ENCODE measurements at regions of chr5 and their contacts with region 1.

Region 1: DNA sequence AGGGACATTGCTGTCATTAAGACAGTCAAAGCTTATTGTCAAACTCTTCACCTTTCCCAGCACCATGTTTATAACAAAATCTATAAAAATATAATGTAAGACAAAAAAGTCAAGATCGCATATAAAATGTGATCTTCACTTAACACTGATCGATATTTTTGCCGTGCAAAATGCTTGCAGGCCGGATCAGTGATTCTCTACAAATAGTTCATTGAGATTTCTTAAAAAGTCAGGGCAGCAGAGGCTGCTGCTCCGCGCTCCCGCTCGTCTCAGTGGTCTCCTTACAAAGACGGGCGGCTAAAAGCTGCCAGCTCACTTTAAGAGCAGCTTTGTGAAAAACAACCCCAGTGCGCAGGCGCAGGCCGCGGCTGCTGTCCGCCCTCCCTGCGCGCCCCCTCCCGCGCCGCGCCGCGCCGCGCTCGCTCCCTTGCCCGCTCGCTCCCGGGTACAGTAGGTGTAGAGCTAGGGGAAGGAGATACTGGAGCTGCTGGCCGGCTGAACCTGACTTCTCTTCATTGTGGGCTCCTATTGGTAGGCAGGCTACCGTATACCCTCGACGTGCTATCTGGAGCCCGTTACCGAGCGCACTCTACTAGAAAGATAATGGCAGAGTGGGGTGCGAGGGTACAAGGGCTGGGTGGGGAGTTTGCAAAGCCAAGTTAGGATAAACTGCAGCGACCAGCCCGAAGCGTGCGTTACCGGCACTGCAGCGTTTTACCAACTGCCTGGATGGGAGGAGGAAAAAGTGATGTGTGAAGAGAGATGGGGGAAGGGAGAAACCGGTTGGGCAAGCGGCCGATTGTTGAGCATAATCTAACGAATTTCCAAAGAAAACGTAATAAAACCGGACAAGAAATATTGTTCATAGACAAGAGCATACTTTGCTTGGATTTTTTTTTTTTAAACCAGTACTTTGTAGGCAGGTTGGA is at the start of gene ARRDC3:
- DNase-seq: peak; percentile 98
- H3K4me3 Mint-ChIP-seq: peak within 1 kb of the TSS; percentile 87
- H3K27ac Mint-ChIP-seq: peak within 1 kb of the TSS; percentile 97
- H3K4me1 Mint-ChIP-seq: peaks cover 24% of the 10 kb centered on the region
- H3K27me3 Mint-ChIP-seq: no peaks in the 10 kb centered on the region
- total RNA-seq, gene ARRDC3: 46.5 to 47.1 TPM

Region 2: DNA sequence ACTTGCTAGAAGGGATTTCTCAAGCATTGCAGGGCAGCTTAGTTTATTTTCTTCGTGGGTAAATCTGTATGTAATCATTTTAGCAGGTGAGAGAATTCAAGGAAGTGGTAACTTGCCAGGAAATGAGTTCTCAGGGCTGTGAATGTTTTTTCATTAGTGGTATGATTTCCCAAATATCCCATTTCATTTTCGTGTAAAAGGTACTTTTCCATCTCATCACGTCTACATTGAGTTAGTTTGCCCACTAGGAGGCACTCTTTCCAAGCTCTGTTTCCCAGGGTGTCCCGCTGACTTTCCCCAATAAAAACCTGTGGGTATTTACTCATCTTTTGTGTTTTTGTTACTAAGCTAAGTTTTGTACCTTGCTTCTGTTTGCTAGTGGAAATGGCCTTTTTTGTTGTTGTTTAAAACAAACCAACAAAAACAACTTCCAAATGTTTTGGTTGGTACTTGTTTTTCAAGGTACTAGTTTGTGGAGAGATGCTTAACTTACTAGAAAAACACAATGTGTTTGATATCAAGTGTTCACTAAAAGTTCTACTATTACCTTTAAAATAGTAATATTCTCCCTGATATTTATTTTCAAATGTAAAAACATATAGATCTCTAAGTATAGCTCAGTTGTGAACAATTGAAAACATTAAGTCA is 451.1 kb before region 1 on chr5:
- CTCF ChIA-PET with region 1: interaction called, 24 read pairs
- POLR2A ChIA-PET with region 1: interaction called, 4 read pairs
- DNase-seq: peak; percentile 19
- H3K4me3 Mint-ChIP-seq: no peak overlapping the region
- H3K27ac Mint-ChIP-seq: no peak overlapping the region
- H3K4me1 Mint-ChIP-seq: no peaks in the 10 kb centered on the region
- H3K27me3 Mint-ChIP-seq: peaks cover 10% of the 10 kb centered on the region

Region 3: GRCh38 chr5:91132550-91132949 is 250.7 kb before region 1 on chr5:
- CTCF ChIA-PET with region 1: no interaction called
- POLR2A ChIA-PET with region 1: no interaction called
- DNase-seq: no peak
- H3K4me3 Mint-ChIP-seq: no peak overlapping the region
- H3K27ac Mint-ChIP-seq: no peak overlapping the region
- H3K4me1 Mint-ChIP-seq: peaks cover 8% of the 10 kb centered on the region
- H3K27me3 Mint-ChIP-seq: peaks cover 3% of the 10 kb centered on the region

Region 4: GRCh38 chr5:91219803-91220371 is 163.4 kb before region 1 on chr5:
- CTCF ChIA-PET with region 1: interaction called, 243 read pairs
- POLR2A ChIA-PET with region 1: interaction called, 58 read pairs
- DNase-seq: peak; percentile 39
- H3K4me3 Mint-ChIP-seq: no peak overlapping the region
- H3K27ac Mint-ChIP-seq: no peak overlapping the region
- H3K4me1 Mint-ChIP-seq: peaks cover 3% of the 10 kb centered on the region
- H3K27me3 Mint-ChIP-seq: peaks cover 4% of the 10 kb centered on the region

Region 5: DNA sequence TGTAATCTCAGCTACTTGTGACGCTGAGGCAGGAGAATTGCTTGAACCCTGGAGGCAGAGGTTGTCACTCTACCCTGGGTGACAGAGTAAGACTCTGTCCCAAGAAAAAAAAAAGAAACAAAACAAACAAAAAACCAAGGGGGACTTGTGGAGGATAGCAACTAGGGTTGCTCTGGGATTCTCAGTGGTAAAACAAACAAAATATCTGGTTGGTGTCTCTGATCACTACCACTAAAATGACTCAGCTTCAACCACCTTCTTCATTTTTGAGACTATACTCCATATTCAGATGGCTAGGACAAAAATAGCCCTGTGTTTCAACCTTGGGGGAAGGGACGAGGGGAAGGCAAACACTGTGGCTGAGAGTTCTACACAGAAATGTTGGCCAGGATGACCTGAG is 110.4 kb before region 1 on chr5:
- CTCF ChIA-PET with region 1: interaction called, 6 read pairs
- POLR2A ChIA-PET with region 1: interaction called, 45 read pairs
- DNase-seq: no peak
- H3K4me3 Mint-ChIP-seq: no peak overlapping the region
- H3K27ac Mint-ChIP-seq: peak overlapping the region; percentile 27
- H3K4me1 Mint-ChIP-seq: peaks cover 23% of the 10 kb centered on the region
- H3K27me3 Mint-ChIP-seq: peaks cover 3% of the 10 kb centered on the region

Region 6: DNA sequence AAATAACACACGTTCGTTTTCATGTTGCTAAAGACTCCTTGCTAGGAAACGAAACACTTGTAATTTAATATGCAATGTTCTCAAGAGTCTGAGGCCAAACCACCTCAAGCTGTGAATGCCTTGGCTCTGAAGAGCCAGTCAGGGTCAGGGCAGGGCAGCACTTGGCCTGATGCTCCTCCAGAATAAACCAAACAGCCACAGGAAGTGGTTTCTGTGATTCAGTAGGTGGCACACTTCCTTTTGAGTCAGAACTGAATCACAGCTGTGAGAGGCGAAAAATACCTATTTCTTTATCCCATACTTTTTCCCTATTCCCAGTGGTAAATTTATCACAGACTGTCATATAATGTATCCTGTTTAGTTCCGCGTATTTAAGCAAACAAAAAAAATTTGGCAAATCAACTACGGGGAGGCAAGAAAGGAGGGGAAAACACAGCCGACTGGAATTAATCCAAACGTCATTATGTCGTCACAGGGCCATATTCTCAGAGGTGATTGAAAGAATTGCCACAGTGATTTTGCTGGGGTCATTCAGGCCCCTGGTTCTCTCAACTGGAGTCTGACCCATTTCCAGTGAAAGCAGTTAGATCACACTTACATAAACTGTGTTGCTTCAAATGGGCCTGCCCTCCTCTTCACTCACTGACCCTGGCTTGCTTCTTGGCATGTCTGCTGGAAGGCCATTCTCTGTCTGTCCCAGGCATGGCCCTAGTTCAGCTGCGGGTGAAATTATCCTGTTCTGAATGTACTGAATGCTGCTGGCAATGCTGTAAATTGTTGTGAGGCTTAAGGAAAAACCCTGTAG is 71.4 kb before region 1 on chr5:
- CTCF ChIA-PET with region 1: interaction called, 52 read pairs
- POLR2A ChIA-PET with region 1: interaction called, 192 read pairs
- DNase-seq: peak; percentile 81
- H3K4me3 Mint-ChIP-seq: peak overlapping the region; percentile 83
- H3K27ac Mint-ChIP-seq: peak overlapping the region; percentile 97
- H3K4me1 Mint-ChIP-seq: peaks cover 59% of the 10 kb centered on the region
- H3K27me3 Mint-ChIP-seq: no peaks in the 10 kb centered on the region

Region 7: DNA sequence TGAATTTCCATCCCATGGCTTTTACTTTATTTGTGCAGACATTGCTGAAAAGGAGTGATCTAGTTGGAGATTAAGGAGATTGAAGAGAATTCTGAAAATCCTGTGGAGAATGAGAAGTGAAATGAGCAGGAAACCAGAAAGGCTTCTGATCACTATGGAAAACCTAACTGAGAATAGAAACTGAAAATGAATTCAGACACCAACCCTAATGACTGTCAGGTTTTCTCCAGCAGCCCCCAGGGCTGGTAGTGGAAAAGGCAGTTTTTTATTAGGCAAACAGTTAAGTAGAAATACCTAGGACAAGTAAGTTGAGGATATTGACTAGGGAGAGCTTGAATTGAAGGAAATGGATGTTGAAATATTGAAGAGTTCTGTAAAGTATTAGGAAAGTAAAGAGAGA is 14.5 kb after region 1 on chr5:
- CTCF ChIA-PET with region 1: interaction called, 11 read pairs
- POLR2A ChIA-PET with region 1: interaction called, 8 read pairs
- DNase-seq: no peak
- H3K4me3 Mint-ChIP-seq: no peak overlapping the region
- H3K27ac Mint-ChIP-seq: no peak overlapping the region
- H3K4me1 Mint-ChIP-seq: peaks cover 11% of the 10 kb centered on the region
- H3K27me3 Mint-ChIP-seq: no peaks in the 10 kb centered on the region